ENCODE measurements at regions of chr9 and their contacts with region 1.

Region 1: GRCh38 chr9:31520301-31521085 is 864.0 kb upstream of the ACO1 start:
- DNase-seq: no peak
- ATAC-seq: no peak
- H3K4me3 ChIP-seq: no peak overlapping the region
- H3K27ac ChIP-seq: no peak overlapping the region
- H3K4me1 ChIP-seq: no peaks in the 10 kb centered on the region
- H3K27me3 ChIP-seq: no peaks in the 10 kb centered on the region

Region 2: GRCh38 chr9:31467086-31467485 is 53.4 kb before region 1 on chr9:
- intact Hi-C with region 1: loop called in 1 of 2 experiments (anchors 10 kb)
- DNase-seq: no peak
- ATAC-seq: no peak
- H3K4me3 ChIP-seq: no peak overlapping the region
- H3K27ac ChIP-seq: no peak overlapping the region
- H3K4me1 ChIP-seq: no peaks in the 10 kb centered on the region
- H3K27me3 ChIP-seq: no peaks in the 10 kb centered on the region

Region 3: DNA sequence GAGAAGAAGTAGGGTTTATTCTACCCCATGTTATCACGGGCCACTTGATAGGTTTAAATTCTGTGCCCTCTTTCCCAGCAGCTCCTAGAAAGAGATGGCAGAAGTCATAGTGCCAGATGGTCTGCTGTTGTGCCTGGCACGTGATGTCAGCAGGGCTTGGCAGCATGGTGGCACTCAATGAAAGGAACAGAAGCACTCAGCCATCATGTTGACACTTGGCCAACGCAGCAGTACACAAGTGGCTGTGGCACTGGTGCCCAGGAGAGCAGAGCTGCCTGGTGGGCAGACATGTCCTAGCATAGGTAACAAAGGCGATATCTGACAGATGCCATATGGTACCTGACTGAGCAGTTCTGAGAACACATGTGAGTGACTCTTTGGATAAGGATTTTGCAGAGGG is 67.5 kb after region 1 on chr9:
- intact Hi-C with region 1: loop called in 1 of 2 experiments (anchors 10 kb)
- DNase-seq: no peak
- ATAC-seq: no peak
- H3K4me3 ChIP-seq: no peak overlapping the region
- H3K27ac ChIP-seq: no peak overlapping the region
- H3K4me1 ChIP-seq: no peaks in the 10 kb centered on the region
- H3K27me3 ChIP-seq: no peaks in the 10 kb centered on the region

Region 4: GRCh38 chr9:32069169-32069813 is 548.8 kb after region 1 on chr9:
- intact Hi-C with region 1: no loop called
- DNase-seq: no peak
- ATAC-seq: no peak
- H3K4me3 ChIP-seq: no peak overlapping the region
- H3K27ac ChIP-seq: no peak overlapping the region
- H3K4me1 ChIP-seq: no peaks in the 10 kb centered on the region
- H3K27me3 ChIP-seq: peaks cover 0 to 2% of the 10 kb centered on the region in 2 donors

Measured in aorta (tissue), 5 donors.